Activated CD4-positive, alpha-beta T cell treated with anti-CD3 and anti-CD28 coated beads for 36 hours (primary cell): ENCODE measurements at regions of chr7 and their contacts with region 1.

Region 1: GRCh38 chr7:66429498-66430163 is 199.1 kb upstream of the KCTD7 start:
- DNase-seq: no peak
- ATAC-seq: no peak
- H3K4me3 Mint-ChIP-seq: no peak overlapping the region
- H3K27ac Mint-ChIP-seq: no peak overlapping the region
- H3K4me1 Mint-ChIP-seq: no peaks in the 10 kb centered on the region
- H3K27me3 Mint-ChIP-seq: no peaks in the 10 kb centered on the region

Region 2: DNA sequence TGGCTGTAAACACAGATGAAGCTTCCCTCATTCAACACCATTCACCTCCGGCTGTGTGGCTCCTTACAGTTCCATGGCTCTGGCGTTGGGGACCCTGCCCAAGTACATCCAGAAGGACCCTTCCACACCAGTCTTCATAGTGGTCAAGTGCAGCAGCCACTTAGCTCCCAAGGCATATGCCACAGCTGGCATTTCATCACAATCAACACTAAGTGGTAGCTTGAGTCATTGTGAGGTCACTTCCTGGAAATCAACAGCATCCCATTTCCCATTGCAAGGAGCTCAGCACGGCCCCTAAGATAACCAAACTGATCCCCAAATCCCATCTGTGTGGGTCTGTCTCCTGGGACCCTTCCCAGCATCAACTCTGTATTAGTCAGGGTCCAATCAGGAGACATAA is 49.9 kb before region 1 on chr7:
- CTCF ChIA-PET with region 1: no interaction called
- POLR2A ChIA-PET with region 1: no interaction called
- intact Hi-C with region 1: loop called in 1 of 2 experiments (anchors 10 kb)
- DNase-seq: no peak
- ATAC-seq: no peak
- H3K4me3 Mint-ChIP-seq: no peak overlapping the region
- H3K27ac Mint-ChIP-seq: no peak overlapping the region
- H3K4me1 Mint-ChIP-seq: no peaks in the 10 kb centered on the region
- H3K27me3 Mint-ChIP-seq: no peaks in the 10 kb centered on the region